Activated B cell treated with CpG ODN at 0.5 μM for 24 hours (primary cell): ENCODE measurements at regions of chr4 and their contacts with region 1.

Region 1: DNA sequence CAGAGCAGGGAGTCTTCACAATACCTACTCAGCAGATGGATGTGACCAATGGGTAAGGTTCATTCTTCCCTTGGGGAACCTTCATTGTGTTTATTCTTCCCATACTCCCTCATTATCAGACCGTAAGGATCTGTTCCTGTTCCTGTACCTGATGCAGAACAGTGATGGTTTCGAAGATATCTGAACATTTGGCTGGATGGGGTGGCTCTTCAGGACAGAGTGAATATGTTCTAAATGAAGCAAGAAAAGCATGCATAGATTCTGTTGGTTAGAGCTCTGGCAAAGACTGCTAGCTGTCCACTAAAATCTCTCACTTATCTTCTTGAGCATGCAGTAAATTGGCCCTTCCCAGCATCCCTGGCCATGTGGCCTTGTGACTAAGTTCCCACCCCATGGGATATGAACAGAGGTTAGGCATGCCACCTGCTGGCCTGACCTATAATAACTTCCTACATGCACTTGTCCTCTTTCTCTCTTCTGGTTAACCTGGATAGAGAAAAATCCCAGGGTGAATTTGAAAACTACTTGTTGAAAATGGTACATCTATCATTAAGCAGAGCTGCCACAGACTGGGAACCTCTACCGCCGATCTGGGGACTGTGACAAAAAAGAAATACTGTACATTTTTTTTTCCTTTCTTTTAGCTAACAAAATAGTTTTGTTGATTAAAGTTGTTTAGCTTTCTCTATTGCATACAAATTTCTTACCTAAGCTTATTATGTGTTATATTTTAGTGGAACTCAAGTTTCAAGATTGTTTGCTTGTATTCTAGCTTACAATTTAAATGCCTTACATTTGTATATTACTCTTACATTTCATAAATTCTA is 60.0 kb upstream of the BANK1 start:
- DNase-seq: no peak
- ATAC-seq: peak; percentile 95
- H3K4me3 Mint-ChIP-seq: no peak overlapping the region
- H3K27ac Mint-ChIP-seq: peak overlapping the region; percentile 53
- H3K4me1 Mint-ChIP-seq: peaks cover 22% of the 10 kb centered on the region
- H3K27me3 Mint-ChIP-seq: no peaks in the 10 kb centered on the region
- CTCF ChIP-seq: peak; percentile 32

Region 2: DNA sequence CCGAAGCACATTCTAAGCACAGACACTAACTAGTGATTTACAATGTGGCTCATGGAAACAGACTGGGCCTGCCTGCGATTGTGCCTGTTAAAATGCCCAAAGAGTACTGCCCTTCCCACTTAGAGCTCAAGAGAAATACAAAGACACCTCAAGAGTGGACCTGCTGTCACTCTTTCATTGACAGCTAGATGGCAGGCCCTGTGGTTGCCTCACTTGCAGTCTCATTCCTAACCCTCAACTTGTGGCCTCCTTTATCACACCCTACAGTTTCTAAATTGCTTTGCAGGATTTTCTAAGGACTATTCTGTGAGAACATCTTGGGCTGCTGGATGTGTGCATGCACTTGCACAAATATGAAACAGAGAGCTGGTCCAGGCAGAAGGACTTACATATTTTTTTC is 881.6 kb before region 1 on chr4:
- CTCF ChIA-PET with region 1: no interaction called
- POLR2A ChIA-PET with region 1: no interaction called
- intact Hi-C with region 1: loop called (anchors 5 kb)
- DNase-seq: no peak
- ATAC-seq: no peak
- H3K4me3 Mint-ChIP-seq: no peak overlapping the region
- H3K27ac Mint-ChIP-seq: no peak overlapping the region
- H3K4me1 Mint-ChIP-seq: no peaks in the 10 kb centered on the region
- H3K27me3 Mint-ChIP-seq: no peaks in the 10 kb centered on the region
- CTCF ChIP-seq: no peak

Region 3: GRCh38 chr4:100935090-100935489 is 795.4 kb before region 1 on chr4:
- CTCF ChIA-PET with region 1: interaction called, 4 read pairs
- POLR2A ChIA-PET with region 1: no interaction called
- intact Hi-C with region 1: loop called (anchors 1 kb)
- DNase-seq: no peak
- ATAC-seq: no peak
- H3K4me3 Mint-ChIP-seq: no peak overlapping the region
- H3K27ac Mint-ChIP-seq: no peak overlapping the region
- H3K4me1 Mint-ChIP-seq: peaks cover 2% of the 10 kb centered on the region
- H3K27me3 Mint-ChIP-seq: no peaks in the 10 kb centered on the region
- CTCF ChIP-seq: no peak

Region 4: GRCh38 chr4:101191302-101192098 is 539.0 kb before region 1 on chr4:
- CTCF ChIA-PET with region 1: interaction called, 9 read pairs
- POLR2A ChIA-PET with region 1: no interaction called
- intact Hi-C with region 1: loop called (anchors 1 kb)
- DNase-seq: no peak
- ATAC-seq: no peak
- H3K4me3 Mint-ChIP-seq: no peak overlapping the region
- H3K27ac Mint-ChIP-seq: peak overlapping the region; percentile 50
- H3K4me1 Mint-ChIP-seq: peaks cover 47% of the 10 kb centered on the region
- H3K27me3 Mint-ChIP-seq: no peaks in the 10 kb centered on the region
- CTCF ChIP-seq: no peak

Region 5: GRCh38 chr4:101328063-101328602 is 402.4 kb before region 1 on chr4:
- CTCF ChIA-PET with region 1: interaction called, 6 read pairs
- POLR2A ChIA-PET with region 1: no interaction called
- intact Hi-C with region 1: loop called (anchors 5 kb)
- DNase-seq: no peak
- ATAC-seq: peak; percentile 63
- H3K4me3 Mint-ChIP-seq: peak overlapping the region; percentile 73
- H3K27ac Mint-ChIP-seq: peak overlapping the region; percentile 88
- H3K4me1 Mint-ChIP-seq: peaks cover 95% of the 10 kb centered on the region
- H3K27me3 Mint-ChIP-seq: no peaks in the 10 kb centered on the region
- CTCF ChIP-seq: no peak

Region 6: GRCh38 chr4:101785486-101785885 is 55.0 kb after region 1 on chr4:
- CTCF ChIA-PET with region 1: interaction called, 3 read pairs
- POLR2A ChIA-PET with region 1: no interaction called
- intact Hi-C with region 1: loop called (anchors 10 kb)
- DNase-seq: no peak
- ATAC-seq: no peak
- H3K4me3 Mint-ChIP-seq: no peak overlapping the region
- H3K27ac Mint-ChIP-seq: no peak overlapping the region
- H3K4me1 Mint-ChIP-seq: peaks cover 53% of the 10 kb centered on the region
- H3K27me3 Mint-ChIP-seq: no peaks in the 10 kb centered on the region
- CTCF ChIP-seq: no peak

Region 7: DNA sequence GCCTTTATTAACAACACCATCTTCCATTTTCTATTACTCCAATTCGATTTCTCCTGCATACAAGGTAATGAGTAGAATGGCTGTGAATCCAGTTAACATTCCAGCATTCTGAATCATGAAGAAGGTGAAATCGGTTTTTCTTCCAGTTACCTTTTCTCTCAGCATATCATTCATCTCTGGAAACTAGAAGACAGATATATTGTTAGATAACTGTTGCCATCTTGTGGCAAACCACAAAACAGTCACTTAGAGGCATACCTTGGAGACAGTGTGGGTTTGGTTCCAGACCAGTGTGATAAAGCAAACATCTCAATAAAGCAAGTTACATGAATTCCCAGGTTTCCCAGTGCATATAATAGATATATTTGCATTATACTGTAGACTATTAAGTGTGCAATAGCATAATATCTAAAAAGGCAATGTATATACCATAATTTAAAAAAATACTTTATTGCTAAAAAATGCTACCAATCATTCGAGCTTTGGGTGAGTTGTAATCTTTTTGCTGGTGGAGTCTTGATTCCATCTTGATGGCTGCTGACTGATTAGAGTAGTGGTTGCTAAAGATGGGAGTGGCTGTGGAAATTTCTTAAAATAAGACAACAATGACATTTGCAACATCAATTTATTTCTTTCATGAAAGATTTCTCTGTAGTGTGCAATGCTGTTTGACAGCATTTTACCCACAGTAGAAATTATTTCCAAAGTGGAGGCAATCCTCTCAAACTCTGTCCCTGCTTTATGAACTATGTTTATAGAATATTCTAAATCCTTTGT is 532.7 kb after region 1 on chr4:
- CTCF ChIA-PET with region 1: no interaction called
- POLR2A ChIA-PET with region 1: no interaction called
- intact Hi-C with region 1: loop called (anchors 5 kb)
- DNase-seq: no peak
- ATAC-seq: peak; percentile 79
- H3K4me3 Mint-ChIP-seq: no peak overlapping the region
- H3K27ac Mint-ChIP-seq: no peak overlapping the region
- H3K4me1 Mint-ChIP-seq: peaks cover 2% of the 10 kb centered on the region
- H3K27me3 Mint-ChIP-seq: no peaks in the 10 kb centered on the region
- CTCF ChIP-seq: peak; percentile 25